ENCODE measurements at regions of chrX and their contacts with region 1.

Region 1: DNA sequence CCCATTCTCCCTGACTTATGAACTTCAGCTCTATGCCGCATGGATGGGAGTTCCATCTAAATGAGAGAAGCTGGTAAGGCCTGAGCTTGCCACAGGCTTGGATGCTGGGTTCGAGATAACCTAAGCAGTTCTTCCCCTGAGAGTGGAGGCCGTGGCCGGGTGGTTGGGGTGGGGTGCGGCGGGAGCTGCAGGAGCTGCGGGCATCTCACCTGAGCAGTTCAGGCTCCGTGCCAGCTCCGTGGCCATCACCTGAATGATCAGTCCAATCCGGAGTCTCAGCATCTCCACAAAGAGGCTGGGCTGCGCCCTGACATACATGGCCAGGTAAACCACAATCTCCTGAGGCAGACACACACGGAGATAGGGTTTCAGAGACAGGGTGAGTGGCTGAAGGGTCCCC is 77.6 kb downstream of the PHKA2 start:
- DNase-seq: no peak
- H3K4me3 ChIP-seq: no peak overlapping the region
- H3K27ac ChIP-seq: no peak overlapping the region
- H3K4me1 ChIP-seq: no peaks in the 10 kb centered on the region
- H3K27me3 ChIP-seq: no peaks in the 10 kb centered on the region
- CTCF ChIP-seq: no peak
- POLR2A ChIP-seq: no peak

Region 2: GRCh38 chrX:18401848-18402213 is 504.5 kb before region 1 on chrX:
- intact Hi-C with region 1: loop called in 1 of 2 experiments (anchors 5 kb)
- DNase-seq: no peak
- H3K4me3 ChIP-seq: no peak overlapping the region
- H3K27ac ChIP-seq: no peak overlapping the region
- H3K4me1 ChIP-seq: no peaks in the 10 kb centered on the region
- H3K27me3 ChIP-seq: no peaks in the 10 kb centered on the region
- CTCF ChIP-seq: no peak
- POLR2A ChIP-seq: no peak